Activated B cell treated with CpG ODN at 0.5 μM for 24 hours (primary cell): ENCODE measurements at regions of chr11 and their contacts with region 1.

Region 1: GRCh38 chr11:67401495-67402191 is at the start of gene PPP1CA:
- DNase-seq: peak; percentile 96
- ATAC-seq: peak; percentile 72
- H3K4me3 Mint-ChIP-seq: peak within 1 kb of the TSS; percentile 86
- H3K27ac Mint-ChIP-seq: peak within 1 kb of the TSS; percentile 91
- H3K4me1 Mint-ChIP-seq: peaks cover 77% of the 10 kb centered on the region
- H3K27me3 Mint-ChIP-seq: no peaks in the 10 kb centered on the region
- CTCF ChIP-seq: no peak
- total RNA-seq, gene PPP1CA: 349 and 354 TPM in 2 replicates

Region 2: DNA sequence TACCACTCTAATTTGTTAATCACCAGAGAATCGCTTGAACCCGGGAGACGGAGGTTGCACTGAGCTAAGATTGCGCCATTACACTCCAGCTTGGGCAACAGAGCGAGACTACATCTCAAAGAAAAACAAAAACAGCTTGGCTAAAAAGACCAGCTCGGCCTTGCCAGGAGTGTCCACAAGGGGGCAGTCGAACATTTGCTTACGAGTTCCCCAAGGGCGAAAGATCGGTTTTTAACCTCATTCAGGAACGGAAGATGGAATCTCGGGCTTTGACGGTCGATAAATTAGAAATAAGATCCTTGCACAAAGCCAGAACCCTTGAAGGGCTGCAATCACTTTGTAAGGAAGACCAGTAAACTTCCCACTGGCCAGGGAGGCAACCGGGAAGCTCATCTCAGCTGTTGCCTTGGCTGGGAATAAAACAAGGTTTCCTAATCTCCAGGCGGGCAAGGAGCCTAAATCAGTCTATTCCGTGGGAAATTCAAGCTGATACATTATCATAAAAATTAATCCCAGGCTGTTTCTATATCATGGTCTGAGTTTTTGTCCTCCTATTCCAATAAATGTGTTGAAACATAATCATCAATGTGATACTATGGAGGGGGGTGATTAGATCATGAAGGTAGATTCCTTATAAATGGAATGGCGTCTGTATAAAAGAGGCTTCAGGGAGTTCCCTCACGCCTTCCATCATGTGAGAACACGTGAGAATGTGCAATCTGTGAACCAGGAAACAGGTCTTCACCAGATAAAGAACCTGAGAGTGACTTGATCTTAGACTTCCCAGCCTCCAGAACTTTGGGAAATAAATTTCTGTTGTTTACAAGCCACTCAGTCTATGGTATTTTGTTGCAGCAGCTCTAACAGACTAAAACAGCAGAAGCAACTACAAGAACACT is 1015.2 kb before region 1 on chr11:
- CTCF ChIA-PET with region 1: no interaction called
- POLR2A ChIA-PET with region 1: no interaction called
- intact Hi-C with region 1: no loop called
- DNase-seq: peak; percentile 68
- ATAC-seq: peak; percentile 84
- H3K4me3 Mint-ChIP-seq: peak overlapping the region; percentile 17
- H3K27ac Mint-ChIP-seq: no peak overlapping the region
- H3K4me1 Mint-ChIP-seq: peaks cover 9% of the 10 kb centered on the region
- H3K27me3 Mint-ChIP-seq: no peaks in the 10 kb centered on the region
- CTCF ChIP-seq: no peak

Region 3: GRCh38 chr11:67213178-67213621 is 188.4 kb before region 1 on chr11:
- CTCF ChIA-PET with region 1: no interaction called
- POLR2A ChIA-PET with region 1: no interaction called
- intact Hi-C with region 1: no loop called
- DNase-seq: no peak
- ATAC-seq: peak; percentile 95
- H3K4me3 Mint-ChIP-seq: peak overlapping the region; percentile 36
- H3K27ac Mint-ChIP-seq: peak overlapping the region; percentile 55
- H3K4me1 Mint-ChIP-seq: peaks cover 20% of the 10 kb centered on the region
- H3K27me3 Mint-ChIP-seq: no peaks in the 10 kb centered on the region
- CTCF ChIP-seq: no peak

Region 4: GRCh38 chr11:67288452-67289225 is 113.0 kb before region 1 on chr11:
- CTCF ChIA-PET with region 1: no interaction called
- POLR2A ChIA-PET with region 1: interaction called, 16 read pairs
- intact Hi-C with region 1: no loop called
- DNase-seq: peak; percentile 96
- ATAC-seq: peak; percentile 76
- H3K4me3 Mint-ChIP-seq: peak overlapping the region; percentile 80
- H3K27ac Mint-ChIP-seq: peak overlapping the region; percentile 98
- H3K4me1 Mint-ChIP-seq: peaks cover 46% of the 10 kb centered on the region
- H3K27me3 Mint-ChIP-seq: no peaks in the 10 kb centered on the region
- CTCF ChIP-seq: no peak

Region 5: DNA sequence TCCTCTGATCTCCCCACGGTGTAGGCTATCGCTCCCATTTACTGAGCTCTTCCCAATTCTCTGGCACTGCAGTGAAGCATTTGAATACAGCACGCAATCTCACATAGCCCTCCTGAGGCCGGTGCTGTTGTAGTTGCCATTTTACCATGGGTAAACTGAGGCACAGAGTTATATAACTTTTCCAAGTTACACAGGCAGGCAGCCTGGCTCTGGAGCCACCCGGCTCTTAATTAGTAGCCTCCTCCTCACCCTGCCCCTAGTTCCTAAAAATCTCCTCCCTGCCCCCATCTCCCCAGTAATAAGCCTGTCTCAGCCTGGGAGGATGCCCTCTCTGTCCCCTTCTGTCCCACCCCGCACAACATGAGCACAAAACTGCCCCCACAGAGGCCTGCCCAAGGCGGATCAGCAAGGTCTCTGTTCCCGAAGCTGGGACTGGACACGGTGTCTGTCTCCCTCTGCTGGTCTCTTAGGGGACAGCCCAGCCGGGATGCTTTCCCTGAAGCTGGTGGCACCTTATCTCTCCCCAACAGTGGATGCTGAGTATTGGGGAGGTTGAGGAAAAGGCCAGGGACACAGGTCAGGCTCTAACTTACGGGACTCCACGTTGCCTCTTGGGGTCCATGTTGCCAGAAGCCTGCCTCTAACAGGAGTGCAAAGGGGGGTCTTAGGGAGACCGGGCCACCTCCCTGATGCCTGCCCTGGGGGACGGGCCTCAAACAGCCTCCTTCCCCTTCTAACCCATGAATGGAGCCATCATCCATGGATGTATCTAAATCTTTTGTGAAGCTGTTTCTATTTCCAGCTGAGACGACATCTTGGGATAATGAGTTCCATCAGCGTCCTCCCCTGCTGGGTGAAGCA is 19.1 kb before region 1 on chr11:
- CTCF ChIA-PET with region 1: interaction called, 10 read pairs
- POLR2A ChIA-PET with region 1: interaction called, 16 read pairs
- intact Hi-C with region 1: no loop called
- DNase-seq: peak; percentile 75
- ATAC-seq: peak; percentile 80
- H3K4me3 Mint-ChIP-seq: peak overlapping the region; percentile 70
- H3K27ac Mint-ChIP-seq: peak overlapping the region; percentile 90
- H3K4me1 Mint-ChIP-seq: peaks cover 31% of the 10 kb centered on the region
- H3K27me3 Mint-ChIP-seq: no peaks in the 10 kb centered on the region
- CTCF ChIP-seq: peak; percentile 47

Region 6: GRCh38 chr11:67428052-67428914 is 26.6 kb after region 1 on chr11 and contains the start of gene RPS6KB2:
- CTCF ChIA-PET with region 1: interaction called, 4 read pairs
- POLR2A ChIA-PET with region 1: interaction called, 693 read pairs
- intact Hi-C with region 1: loop called (anchors 1 kb)
- DNase-seq: peak; percentile 99
- ATAC-seq: peak; percentile 81
- H3K4me3 Mint-ChIP-seq: peak within 1 kb of the TSS; percentile 98
- H3K27ac Mint-ChIP-seq: peak within 1 kb of the TSS; percentile 93
- H3K4me1 Mint-ChIP-seq: peaks cover 41% of the 10 kb centered on the region
- H3K27me3 Mint-ChIP-seq: no peaks in the 10 kb centered on the region
- CTCF ChIP-seq: no peak
- total RNA-seq, gene RPS6KB2: 66.9 and 74.5 TPM in 2 replicates

Region 7: DNA sequence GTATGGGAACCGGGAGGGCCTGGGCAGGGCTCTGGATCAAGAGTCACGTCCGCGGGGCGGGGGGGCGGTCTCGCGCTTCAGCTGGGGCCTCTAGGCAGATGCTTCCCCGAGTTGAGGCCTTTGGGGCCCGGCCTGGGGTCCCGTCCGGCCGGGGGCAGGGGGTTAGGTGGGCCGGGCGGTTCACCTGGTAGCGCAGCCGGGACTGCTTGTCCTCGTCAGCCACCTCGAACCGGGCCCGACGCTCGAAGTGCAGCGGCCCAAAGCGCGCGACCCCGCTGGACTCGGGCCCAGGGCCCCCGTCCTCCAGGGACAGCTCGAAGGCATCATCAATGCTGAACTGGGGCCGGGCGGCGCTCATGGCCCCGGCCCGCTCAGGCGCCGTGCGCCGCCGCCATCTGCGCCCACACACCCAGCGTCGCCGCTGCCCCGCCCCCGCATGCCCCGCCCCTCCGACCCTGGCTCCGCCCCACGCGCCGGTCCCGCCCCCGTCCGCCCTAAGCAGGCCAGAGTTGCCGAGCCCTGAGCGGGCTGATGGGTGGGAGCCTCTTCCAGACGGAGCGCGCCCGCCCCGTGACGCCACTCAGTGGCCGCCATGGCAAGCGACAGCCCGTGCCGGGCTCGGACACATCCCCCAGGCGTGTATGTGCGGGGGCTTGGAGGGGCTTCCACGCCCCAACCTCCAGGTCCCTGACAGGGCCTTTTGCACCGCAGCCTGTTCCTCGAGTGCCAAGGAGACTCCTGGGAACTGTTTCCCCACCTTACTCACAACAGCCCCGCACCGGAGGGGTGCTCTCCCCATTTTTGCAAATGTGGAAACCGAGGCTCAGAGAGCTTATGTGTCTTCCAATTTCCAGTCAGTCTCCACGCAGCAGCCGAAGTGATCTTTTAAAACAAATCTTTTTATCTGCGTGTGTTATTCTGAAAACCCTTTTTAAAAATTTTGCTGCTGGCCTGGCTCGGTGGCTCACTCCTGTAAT is 67.5 kb after region 1 on chr11 and contains the start of gene TMEM134:
- CTCF ChIA-PET with region 1: interaction called, 23 read pairs
- POLR2A ChIA-PET with region 1: interaction called, 121 read pairs
- intact Hi-C with region 1: loop called (anchors 1 kb)
- DNase-seq: peak; percentile 88
- ATAC-seq: peak; percentile 73
- H3K4me3 Mint-ChIP-seq: peak within 1 kb of the TSS; percentile 89
- H3K27ac Mint-ChIP-seq: peak within 1 kb of the TSS; percentile 91
- H3K4me1 Mint-ChIP-seq: peaks cover 49% of the 10 kb centered on the region
- H3K27me3 Mint-ChIP-seq: no peaks in the 10 kb centered on the region
- CTCF ChIP-seq: no peak
- total RNA-seq, gene TMEM134: 76.0 and 83.5 TPM in 2 replicates

Region 8: GRCh38 chr11:67572747-67573419 is 171.2 kb after region 1 on chr11:
- CTCF ChIA-PET with region 1: no interaction called
- POLR2A ChIA-PET with region 1: no interaction called
- intact Hi-C with region 1: no loop called
- DNase-seq: no peak
- ATAC-seq: peak; percentile 28
- H3K4me3 Mint-ChIP-seq: no peak overlapping the region
- H3K27ac Mint-ChIP-seq: no peak overlapping the region
- H3K4me1 Mint-ChIP-seq: peaks cover 9% of the 10 kb centered on the region
- H3K27me3 Mint-ChIP-seq: peaks cover 25% of the 10 kb centered on the region
- CTCF ChIP-seq: no peak

Region 9: DNA sequence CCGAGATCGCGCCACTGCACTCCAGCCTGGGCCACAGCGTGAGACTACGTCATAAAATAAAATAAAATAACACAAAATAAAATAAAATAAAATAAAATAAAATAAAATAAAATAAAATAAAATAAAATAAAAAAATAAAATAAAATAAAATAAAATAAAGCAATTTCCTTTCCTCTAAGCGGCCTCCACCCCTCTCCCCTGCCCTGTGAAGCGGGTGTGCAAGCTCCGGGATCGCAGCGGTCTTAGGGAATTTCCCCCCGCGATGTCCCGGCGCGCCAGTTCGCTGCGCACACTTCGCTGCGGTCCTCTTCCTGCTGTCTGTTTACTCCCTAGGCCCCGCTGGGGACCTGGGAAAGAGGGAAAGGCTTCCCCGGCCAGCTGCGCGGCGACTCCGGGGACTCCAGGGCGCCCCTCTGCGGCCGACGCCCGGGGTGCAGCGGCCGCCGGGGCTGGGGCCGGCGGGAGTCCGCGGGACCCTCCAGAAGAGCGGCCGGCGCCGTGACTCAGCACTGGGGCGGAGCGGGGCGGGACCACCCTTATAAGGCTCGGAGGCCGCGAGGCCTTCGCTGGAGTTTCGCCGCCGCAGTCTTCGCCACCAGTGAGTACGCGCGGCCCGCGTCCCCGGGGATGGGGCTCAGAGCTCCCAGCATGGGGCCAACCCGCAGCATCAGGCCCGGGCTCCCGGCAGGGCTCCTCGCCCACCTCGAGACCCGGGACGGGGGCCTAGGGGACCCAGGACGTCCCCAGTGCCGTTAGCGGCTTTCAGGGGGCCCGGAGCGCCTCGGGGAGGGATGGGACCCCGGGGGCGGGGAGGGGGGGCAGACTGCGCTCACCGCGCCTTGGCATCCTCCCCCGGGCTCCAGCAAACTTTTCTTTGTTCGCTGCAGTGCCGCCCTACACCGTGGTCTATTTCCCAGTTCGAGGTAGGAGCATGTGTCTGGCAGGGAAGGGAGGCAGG is 181.9 kb after region 1 on chr11 and contains the start of gene GSTP1:
- CTCF ChIA-PET with region 1: no interaction called
- POLR2A ChIA-PET with region 1: interaction called, 10 read pairs
- intact Hi-C with region 1: loop called (anchors 5 kb)
- DNase-seq: peak; percentile 84
- ATAC-seq: peak; percentile 76
- H3K4me3 Mint-ChIP-seq: peak within 1 kb of the TSS; percentile 89
- H3K27ac Mint-ChIP-seq: peak within 1 kb of the TSS; percentile 99
- H3K4me1 Mint-ChIP-seq: peaks cover 76% of the 10 kb centered on the region
- H3K27me3 Mint-ChIP-seq: no peaks in the 10 kb centered on the region
- CTCF ChIP-seq: no peak
- total RNA-seq, gene GSTP1: 331 and 362 TPM in 2 replicates